ENCODE measurements at regions of chr10 and their contacts with region 1.

Region 1: DNA sequence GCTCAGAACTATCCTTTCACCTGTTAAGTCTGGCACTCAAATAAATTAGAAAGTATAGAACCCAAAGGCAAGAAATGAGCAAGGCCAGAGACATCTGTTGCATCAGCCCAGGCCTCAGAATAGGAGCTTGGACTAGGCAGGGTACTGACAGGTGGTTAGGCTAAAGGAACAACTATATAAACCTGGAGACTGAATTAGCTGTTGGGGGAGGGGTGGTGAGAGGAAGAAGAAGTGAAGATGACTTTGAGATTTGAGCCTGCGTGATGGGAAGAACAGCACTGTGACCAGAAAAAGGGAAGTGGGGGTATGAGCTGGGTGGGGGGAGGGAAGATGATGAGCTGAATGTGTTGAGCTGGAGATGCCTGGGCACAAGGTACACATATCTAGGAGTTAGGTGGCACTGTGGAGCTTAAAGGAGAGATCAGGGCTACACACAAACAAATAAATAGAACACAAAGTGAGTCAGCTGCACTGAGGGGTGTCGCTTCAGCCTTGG is 244.7 kb downstream of the PTEN start:
- DNase-seq: peak; percentile 94
- ATAC-seq: peak; percentile 78
- H3K4me3 ChIP-seq: peak overlapping the region in 1 of 5 experiments; percentile 22
- H3K4me3 Mint-ChIP-seq: peak overlapping the region; percentile 59
- H3K27ac ChIP-seq: peak overlapping the region; percentile 17 to 34
- H3K27ac Mint-ChIP-seq: peak overlapping the region; percentile 81
- H3K4me1 ChIP-seq: peaks cover 80 to 87% of the 10 kb centered on the region in 2 donors
- H3K4me1 Mint-ChIP-seq: peaks cover 84% of the 10 kb centered on the region
- H3K27me3 ChIP-seq: no peaks in the 10 kb centered on the region
- H3K27me3 Mint-ChIP-seq: no peaks in the 10 kb centered on the region
- CTCF ChIP-seq: no peak

Region 2: DNA sequence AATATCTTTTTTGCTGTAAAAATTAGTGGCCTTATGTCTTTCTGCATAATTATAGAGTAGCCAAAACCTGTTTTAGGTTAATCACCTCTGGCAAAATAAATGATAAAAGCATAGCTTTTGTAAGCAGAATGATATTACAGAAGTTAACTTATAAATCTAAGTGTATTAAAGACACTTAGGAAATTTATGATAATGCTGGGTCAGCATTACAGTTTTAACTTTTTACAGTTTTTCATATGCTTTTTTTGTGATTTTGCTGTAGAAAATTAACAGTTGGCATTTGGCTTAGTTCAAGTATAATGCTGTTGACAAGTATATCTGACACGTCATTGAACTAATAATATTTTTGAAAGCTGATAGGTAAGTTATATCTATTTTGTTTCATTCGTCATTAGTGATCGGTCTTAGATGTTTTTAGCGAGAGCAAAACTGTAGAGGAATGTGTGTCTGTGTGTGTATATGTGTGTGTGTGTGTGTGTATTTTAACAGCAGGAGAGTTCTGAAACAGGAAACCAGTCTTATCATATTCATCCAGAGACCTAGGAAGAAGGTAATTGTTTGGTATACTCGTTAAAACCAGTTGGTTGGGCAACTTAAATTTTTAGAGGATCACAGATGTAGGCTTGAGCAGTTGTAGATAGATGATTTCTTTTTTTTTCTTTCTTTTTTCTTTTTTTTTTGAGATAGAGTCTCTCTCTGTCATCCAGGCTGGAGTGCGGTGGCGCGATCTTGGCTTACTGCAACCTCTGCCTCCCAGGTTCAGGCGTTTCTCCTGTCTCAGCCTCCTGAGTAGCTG is 229.3 kb before region 1 on chr10:
- CTCF ChIA-PET with region 1: no interaction called
- POLR2A ChIA-PET with region 1: no interaction called
- intact Hi-C with region 1: no loop called
- DNase-seq: no peak
- ATAC-seq: no peak
- H3K4me3 ChIP-seq: no peak overlapping the region
- H3K4me3 Mint-ChIP-seq: no peak overlapping the region
- H3K27ac ChIP-seq: peak overlapping the region in 1 of 2 donors; percentile 39
- H3K27ac Mint-ChIP-seq: peak overlapping the region; percentile 27
- H3K4me1 ChIP-seq: peaks cover 4 to 18% of the 10 kb centered on the region in 2 donors
- H3K4me1 Mint-ChIP-seq: peaks cover 42% of the 10 kb centered on the region
- H3K27me3 ChIP-seq: no peaks in the 10 kb centered on the region
- H3K27me3 Mint-ChIP-seq: no peaks in the 10 kb centered on the region
- CTCF ChIP-seq: no peak

Region 3: GRCh38 chr10:88042160-88043100 is 65.7 kb before region 1 on chr10:
- CTCF ChIA-PET with region 1: no interaction called
- POLR2A ChIA-PET with region 1: no interaction called
- intact Hi-C with region 1: no loop called
- DNase-seq: no peak
- ATAC-seq: no peak
- H3K4me3 ChIP-seq: no peak overlapping the region
- H3K4me3 Mint-ChIP-seq: no peak overlapping the region
- H3K27ac ChIP-seq: no peak overlapping the region
- H3K27ac Mint-ChIP-seq: no peak overlapping the region
- H3K4me1 ChIP-seq: peaks cover 3 to 8% of the 10 kb centered on the region in 2 donors
- H3K4me1 Mint-ChIP-seq: peaks cover 7% of the 10 kb centered on the region
- H3K27me3 ChIP-seq: no peaks in the 10 kb centered on the region
- H3K27me3 Mint-ChIP-seq: no peaks in the 10 kb centered on the region
- CTCF ChIP-seq: no peak

Region 4: GRCh38 chr10:88070080-88070880 is 37.9 kb before region 1 on chr10:
- CTCF ChIA-PET with region 1: interaction called, 6 read pairs
- POLR2A ChIA-PET with region 1: no interaction called
- intact Hi-C with region 1: loop called (anchors 1 kb)
- DNase-seq: peak; percentile 50
- ATAC-seq: peak; percentile 67
- H3K4me3 ChIP-seq: no peak overlapping the region
- H3K4me3 Mint-ChIP-seq: peak overlapping the region; percentile 67
- H3K27ac ChIP-seq: no peak overlapping the region
- H3K27ac Mint-ChIP-seq: peak overlapping the region; percentile 27
- H3K4me1 ChIP-seq: peaks cover 72% of the 10 kb centered on the region in 2 donors
- H3K4me1 Mint-ChIP-seq: peaks cover 69% of the 10 kb centered on the region
- H3K27me3 ChIP-seq: no peaks in the 10 kb centered on the region
- H3K27me3 Mint-ChIP-seq: no peaks in the 10 kb centered on the region
- CTCF ChIP-seq: no peak

Region 5: DNA sequence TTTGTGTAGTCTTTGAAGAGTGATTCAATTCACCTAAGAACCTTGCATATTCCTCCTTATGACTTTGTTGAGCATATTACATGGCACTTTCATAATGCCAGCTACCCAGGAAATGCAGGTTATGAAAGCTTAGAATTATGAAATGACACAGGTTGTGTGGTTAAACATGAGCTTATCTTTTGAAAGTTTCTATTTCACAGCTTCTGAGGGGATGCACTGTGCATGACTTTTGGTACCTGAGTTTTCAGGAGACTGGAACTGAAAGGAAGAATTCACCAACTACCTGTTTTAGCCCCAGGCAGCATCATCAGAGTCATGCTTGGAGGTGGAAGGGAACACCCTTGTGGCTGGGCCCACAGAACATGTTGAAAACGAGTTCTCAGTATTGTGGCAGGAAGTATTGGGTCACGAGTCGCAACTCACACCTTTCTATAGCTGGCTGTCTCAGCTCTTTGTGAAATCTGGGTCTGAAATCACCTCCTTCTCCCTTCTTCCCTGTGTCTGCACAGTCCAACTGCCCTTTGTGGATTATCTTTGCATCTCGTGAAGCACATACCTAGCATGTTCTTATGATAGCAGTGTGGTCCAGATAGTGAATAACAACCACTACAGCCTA is 16.6 kb before region 1 on chr10:
- CTCF ChIA-PET with region 1: interaction called, 23 read pairs
- POLR2A ChIA-PET with region 1: interaction called, 3 read pairs
- intact Hi-C with region 1: loop called (anchors 1 kb)
- DNase-seq: peak; percentile 81
- ATAC-seq: peak; percentile 86
- H3K4me3 ChIP-seq: no peak overlapping the region
- H3K4me3 Mint-ChIP-seq: no peak overlapping the region
- H3K27ac ChIP-seq: peak overlapping the region; percentile 39 to 57
- H3K27ac Mint-ChIP-seq: peak overlapping the region; percentile 79
- H3K4me1 ChIP-seq: peaks cover 28 to 29% of the 10 kb centered on the region in 2 donors
- H3K4me1 Mint-ChIP-seq: peaks cover 37% of the 10 kb centered on the region
- H3K27me3 ChIP-seq: no peaks in the 10 kb centered on the region
- H3K27me3 Mint-ChIP-seq: no peaks in the 10 kb centered on the region
- CTCF ChIP-seq: no peak

Region 6: GRCh38 chr10:88243836-88244730 is 135.9 kb after region 1 on chr10:
- CTCF ChIA-PET with region 1: no interaction called
- POLR2A ChIA-PET with region 1: no interaction called
- intact Hi-C with region 1: no loop called
- DNase-seq: no peak
- ATAC-seq: no peak
- H3K4me3 ChIP-seq: no peak overlapping the region
- H3K4me3 Mint-ChIP-seq: no peak overlapping the region
- H3K27ac ChIP-seq: no peak overlapping the region
- H3K27ac Mint-ChIP-seq: no peak overlapping the region
- H3K4me1 ChIP-seq: peaks cover 3 to 14% of the 10 kb centered on the region in 2 donors
- H3K4me1 Mint-ChIP-seq: peaks cover 22% of the 10 kb centered on the region
- H3K27me3 ChIP-seq: no peaks in the 10 kb centered on the region
- H3K27me3 Mint-ChIP-seq: no peaks in the 10 kb centered on the region
- CTCF ChIP-seq: no peak

Measured in B cell (primary cell).